ENCODE measurements at regions of chr12 and their contacts with region 1.

Region 1: DNA sequence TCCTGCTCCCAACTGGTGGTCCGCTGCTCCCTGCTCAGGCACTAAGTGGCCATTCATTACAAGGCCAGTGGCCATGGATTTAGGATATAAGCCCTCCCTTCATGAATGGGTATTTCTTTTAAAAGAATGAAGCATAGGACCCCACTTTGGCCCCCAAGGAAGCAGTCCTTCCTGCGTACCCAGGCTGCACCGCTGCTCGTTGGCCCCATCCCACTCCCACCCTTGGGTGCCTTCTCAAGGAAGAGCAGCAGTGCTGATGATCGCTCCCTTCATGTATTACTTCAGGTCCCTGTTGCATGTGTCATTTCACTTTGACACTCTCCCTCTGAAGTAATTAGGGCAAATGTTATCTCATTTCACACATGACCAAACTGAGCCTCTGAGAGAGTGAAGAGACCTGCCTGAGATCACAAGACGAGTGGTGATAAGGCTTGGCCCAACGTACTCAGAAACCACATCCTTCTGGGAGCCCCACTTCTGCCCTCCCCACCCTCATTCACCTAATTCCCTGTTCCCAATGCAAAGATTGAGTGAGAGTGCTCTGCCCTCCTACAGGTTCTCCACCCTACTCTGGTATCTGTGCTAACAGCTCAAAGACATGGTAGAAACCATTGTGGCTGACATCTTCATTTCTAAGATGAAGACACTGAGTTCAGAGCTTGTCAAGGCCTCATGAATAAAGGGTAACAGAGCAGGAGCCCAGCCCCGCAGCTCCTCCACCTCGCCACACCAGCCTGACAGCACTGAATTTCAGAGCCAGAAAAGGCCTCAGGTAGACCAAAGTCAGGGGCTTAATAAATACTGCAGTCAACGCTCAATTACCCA is 10.3 kb upstream of the KRT2 start:
- DNase-seq: no peak
- ATAC-seq: no peak
- H3K4me3 ChIP-seq: no peak overlapping the region
- H3K4me3 Mint-ChIP-seq: no peak overlapping the region
- H3K27ac ChIP-seq: no peak overlapping the region
- H3K27ac Mint-ChIP-seq: peak overlapping the region in 4 of 9 donors; percentile 67 to 90 (median 73)
- H3K4me1 ChIP-seq: no peaks in the 10 kb centered on the region
- H3K4me1 Mint-ChIP-seq: peaks cover 5 to 30% (median 16%) of the 10 kb centered on the region in 7 donors
- H3K27me3 ChIP-seq: no peaks in the 10 kb centered on the region
- H3K27me3 Mint-ChIP-seq: peaks cover 0 to 22% (median 0%) of the 10 kb centered on the region in 5 donors

Region 2: DNA sequence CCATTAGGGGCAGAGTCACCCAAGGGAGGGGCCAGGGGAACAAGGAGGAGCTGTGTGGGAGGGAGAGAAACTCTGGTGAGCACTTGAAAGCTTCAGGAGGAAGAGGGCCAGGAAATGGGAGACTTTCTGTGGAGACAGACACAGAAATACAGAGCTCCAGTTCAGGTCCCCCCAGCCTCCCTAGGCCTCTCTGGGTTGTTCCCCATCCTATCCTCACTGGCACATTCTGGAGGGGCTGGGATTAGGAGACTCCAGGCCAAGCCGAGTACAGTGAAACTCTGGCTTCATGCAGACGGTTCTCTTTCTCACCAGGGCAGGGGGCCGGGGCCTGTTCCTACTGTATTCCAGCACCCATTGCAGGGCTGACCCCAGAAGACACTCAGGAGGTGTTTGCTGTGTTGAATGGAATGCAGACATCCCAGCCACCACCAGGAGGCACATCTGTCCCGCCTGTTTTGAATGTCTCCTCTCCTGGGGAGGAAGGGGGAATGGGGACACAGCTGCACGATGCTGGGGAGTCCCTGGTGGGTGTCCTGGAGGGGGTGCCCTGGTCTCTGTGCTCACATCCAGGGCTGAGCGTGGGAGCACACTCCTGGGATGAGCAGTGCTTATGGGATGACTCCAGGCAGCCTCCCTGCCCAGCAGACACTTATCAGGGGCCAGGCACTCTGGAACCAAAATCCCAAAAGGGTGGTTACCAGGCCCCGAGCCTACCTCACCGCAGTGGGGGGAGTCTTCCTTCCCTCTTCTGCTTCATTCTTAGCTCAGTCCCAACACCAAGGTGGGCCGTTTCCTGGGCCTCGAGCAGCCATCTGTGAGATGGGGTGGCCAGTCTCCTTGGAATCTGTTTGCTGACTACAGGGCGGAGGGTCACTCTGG is 271.3 kb before region 1 on chr12:
- CTCF ChIA-PET with region 1: no interaction called
- POLR2A ChIA-PET with region 1: no interaction called
- intact Hi-C with region 1: no loop called
- DNase-seq: peak in 1 of 9 donors; percentile 8
- ATAC-seq: no peak
- H3K4me3 ChIP-seq: no peak overlapping the region
- H3K4me3 Mint-ChIP-seq: no peak overlapping the region
- H3K27ac ChIP-seq: no peak overlapping the region
- H3K27ac Mint-ChIP-seq: no peak overlapping the region
- H3K4me1 ChIP-seq: no peaks in the 10 kb centered on the region
- H3K4me1 Mint-ChIP-seq: peaks cover 0 to 1% (median 0%) of the 10 kb centered on the region in 7 donors
- H3K27me3 ChIP-seq: no peaks in the 10 kb centered on the region
- H3K27me3 Mint-ChIP-seq: peaks cover 0 to 4% (median 0%) of the 10 kb centered on the region in 5 donors

Region 3: GRCh38 chr12:52551216-52551865 is 111.0 kb before region 1 on chr12:
- CTCF ChIA-PET with region 1: no interaction called
- POLR2A ChIA-PET with region 1: no interaction called
- intact Hi-C with region 1: no loop called
- DNase-seq: no peak
- ATAC-seq: no peak
- H3K4me3 ChIP-seq: no peak overlapping the region
- H3K4me3 Mint-ChIP-seq: no peak overlapping the region
- H3K27ac ChIP-seq: no peak overlapping the region
- H3K27ac Mint-ChIP-seq: peak overlapping the region in 1 of 9 donors; percentile 38
- H3K4me1 ChIP-seq: peaks cover 0 to 19% of the 10 kb centered on the region in 2 donors
- H3K4me1 Mint-ChIP-seq: peaks cover 0 to 13% (median 0%) of the 10 kb centered on the region in 7 donors
- H3K27me3 ChIP-seq: no peaks in the 10 kb centered on the region
- H3K27me3 Mint-ChIP-seq: peaks cover 0 to 21% (median 0%) of the 10 kb centered on the region in 5 donors

Region 4: GRCh38 chr12:52672321-52672933 is 10.1 kb after region 1 on chr12:
- CTCF ChIA-PET with region 1: interaction called, 3 read pairs
- POLR2A ChIA-PET with region 1: interaction called, 12 read pairs
- intact Hi-C with region 1: no loop called
- DNase-seq: no peak
- ATAC-seq: no peak
- H3K4me3 ChIP-seq: no peak overlapping the region
- H3K4me3 Mint-ChIP-seq: no peak overlapping the region
- H3K27ac ChIP-seq: no peak overlapping the region
- H3K27ac Mint-ChIP-seq: no peak overlapping the region
- H3K4me1 ChIP-seq: no peaks in the 10 kb centered on the region
- H3K4me1 Mint-ChIP-seq: peaks cover 2 to 43% (median 34%) of the 10 kb centered on the region in 7 donors
- H3K27me3 ChIP-seq: no peaks in the 10 kb centered on the region
- H3K27me3 Mint-ChIP-seq: peaks cover 0 to 17% (median 0%) of the 10 kb centered on the region in 5 donors

Region 5: DNA sequence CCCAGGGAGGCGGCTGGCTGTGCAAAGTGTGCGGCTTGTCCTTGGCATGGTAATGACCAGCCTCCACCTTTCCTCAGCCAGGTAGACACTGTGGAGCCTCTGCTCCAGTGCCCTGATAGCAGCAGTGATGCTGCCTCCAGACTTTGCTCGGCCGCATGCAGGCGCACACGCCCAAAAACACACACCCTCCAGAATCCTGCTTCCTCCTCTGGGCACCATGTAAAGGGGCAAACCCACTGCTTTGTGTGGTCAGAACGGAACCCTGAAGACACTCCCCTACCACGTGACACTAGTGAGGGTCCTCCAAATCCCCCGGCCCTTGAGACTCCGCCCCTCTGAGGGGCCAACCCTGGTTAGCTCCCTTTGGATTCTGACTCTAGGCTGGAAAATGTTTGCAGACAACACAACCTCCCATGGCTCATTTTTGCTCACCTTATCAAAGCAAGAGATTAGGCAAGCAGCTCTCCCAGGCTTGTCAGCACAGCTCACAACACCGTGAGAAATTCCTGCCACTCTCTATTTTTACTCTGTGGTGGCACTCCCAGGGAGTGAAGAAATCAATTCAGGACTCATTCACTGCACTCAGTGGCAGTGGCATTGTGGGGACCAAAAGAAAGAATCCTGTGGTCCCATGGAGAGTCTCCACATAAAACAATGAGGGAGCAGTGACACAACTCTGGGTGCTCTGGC is 36.5 kb after region 1 on chr12:
- CTCF ChIA-PET with region 1: no interaction called
- POLR2A ChIA-PET with region 1: no interaction called
- intact Hi-C with region 1: no loop called
- DNase-seq: no peak
- ATAC-seq: no peak
- H3K4me3 ChIP-seq: no peak overlapping the region
- H3K4me3 Mint-ChIP-seq: no peak overlapping the region
- H3K27ac ChIP-seq: no peak overlapping the region
- H3K27ac Mint-ChIP-seq: peak overlapping the region in 2 of 9 donors; percentile 31 to 36
- H3K4me1 ChIP-seq: no peaks in the 10 kb centered on the region
- H3K4me1 Mint-ChIP-seq: peaks cover 0 to 20% (median 7%) of the 10 kb centered on the region in 7 donors
- H3K27me3 ChIP-seq: no peaks in the 10 kb centered on the region
- H3K27me3 Mint-ChIP-seq: peaks cover 0 to 22% (median 0%) of the 10 kb centered on the region in 5 donors

Region 6: DNA sequence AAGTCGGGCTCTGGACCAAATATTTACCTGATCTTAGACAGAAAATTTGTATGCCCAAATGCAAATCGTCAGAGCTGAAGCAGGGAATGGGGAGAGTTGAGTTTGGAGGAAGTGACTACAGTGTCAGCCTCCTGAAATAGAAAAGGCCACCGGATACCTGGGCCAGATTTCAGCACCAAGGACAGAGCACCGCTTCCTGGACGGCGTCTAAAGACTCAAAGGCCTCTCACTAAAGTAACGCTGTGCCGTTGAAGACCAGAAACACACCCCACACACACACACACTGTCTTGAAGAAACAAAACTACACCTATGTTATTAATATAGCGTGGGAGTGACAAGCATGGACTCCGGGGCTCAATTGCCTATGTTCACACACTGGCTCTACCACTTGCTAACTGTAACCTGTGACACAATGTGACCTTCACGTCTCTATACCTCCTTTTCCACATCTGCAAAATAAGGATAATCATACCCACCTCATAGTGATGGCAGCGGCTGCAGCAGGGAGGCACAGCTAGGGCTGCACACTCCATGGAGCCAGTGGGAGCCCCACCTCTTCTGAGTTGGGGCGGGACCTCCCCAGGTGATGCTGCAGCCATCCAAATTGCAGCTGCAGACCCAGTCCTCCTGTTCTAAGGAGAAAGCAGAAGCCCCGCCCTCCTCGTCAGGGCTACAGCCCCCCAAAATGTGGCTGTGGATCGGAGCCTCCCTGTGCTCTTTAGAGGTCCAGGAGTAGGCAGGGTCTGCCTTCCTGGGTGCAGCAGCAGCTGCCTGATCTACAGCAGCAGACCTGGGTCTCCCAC is 79.3 kb after region 1 on chr12:
- CTCF ChIA-PET with region 1: no interaction called
- POLR2A ChIA-PET with region 1: no interaction called
- intact Hi-C with region 1: no loop called
- DNase-seq: peak; percentile 31 to 73 (median 57)
- ATAC-seq: peak; percentile 61
- H3K4me3 ChIP-seq: no peak overlapping the region
- H3K4me3 Mint-ChIP-seq: no peak overlapping the region
- H3K27ac ChIP-seq: no peak overlapping the region
- H3K27ac Mint-ChIP-seq: no peak overlapping the region
- H3K4me1 ChIP-seq: no peaks in the 10 kb centered on the region
- H3K4me1 Mint-ChIP-seq: peaks cover 0 to 4% (median 0%) of the 10 kb centered on the region in 7 donors
- H3K27me3 ChIP-seq: no peaks in the 10 kb centered on the region
- H3K27me3 Mint-ChIP-seq: peaks cover 0 to 13% (median 6%) of the 10 kb centered on the region in 5 donors